Transverse colon (tissue), 4 donors: ENCODE measurements at regions of chr17 and their contacts with region 1.

Region 1: GRCh38 chr17:8832711-8833352 is 33.7 kb upstream of the MFSD6L start:
- DNase-seq: peak; percentile 28
- H3K4me3 ChIP-seq: no peak overlapping the region
- H3K27ac ChIP-seq: no peak overlapping the region
- H3K4me1 ChIP-seq: no peaks in the 10 kb centered on the region
- H3K27me3 ChIP-seq: peaks cover 8% of the 10 kb centered on the region
- CTCF ChIP-seq: peak; percentile 26 to 54 (median 45)
- EP300 ChIP-seq: no peak
- POLR2A ChIP-seq: no peak

Region 2: GRCh38 chr17:8935191-8935590 is 102.4 kb after region 1 on chr17:
- in situ Hi-C with region 1: loop called in 1 of 4 experiments (anchors 25 kb)
- intact Hi-C with region 1: no loop called
- DNase-seq: no peak
- H3K4me3 ChIP-seq: no peak overlapping the region
- H3K27ac ChIP-seq: no peak overlapping the region
- H3K4me1 ChIP-seq: no peaks in the 10 kb centered on the region
- H3K27me3 ChIP-seq: no peaks in the 10 kb centered on the region
- CTCF ChIP-seq: no peak
- EP300 ChIP-seq: no peak
- POLR2A ChIP-seq: no peak

Region 3: GRCh38 chr17:9115446-9116191 is 282.8 kb after region 1 on chr17:
- in situ Hi-C with region 1: no loop called
- intact Hi-C with region 1: loop called (anchors 5 kb)
- DNase-seq: peak; percentile 48
- H3K4me3 ChIP-seq: peak overlapping the region in 3 of 4 donors; percentile 9 to 47 (median 30)
- H3K27ac ChIP-seq: peak overlapping the region; percentile 59 to 76 (median 74)
- H3K4me1 ChIP-seq: peaks cover 0 to 15% (median 4%) of the 10 kb centered on the region in 4 donors
- H3K27me3 ChIP-seq: no peaks in the 10 kb centered on the region
- CTCF ChIP-seq: peak in 4 of 5 experiments; percentile 18 to 38 (median 24)
- EP300 ChIP-seq: no peak
- POLR2A ChIP-seq: no peak